Naive thymus-derived CD4-positive, alpha-beta T cell (primary cell): ENCODE measurements at regions of chr1 and their contacts with region 1.

Region 1: GRCh38 chr1:26833432-26834405 is 7.2 kb downstream of the ZDHHC18 start:
- DNase-seq: peak; percentile 59 to 95 (median 88)
- ATAC-seq: peak; percentile 97
- H3K4me3 ChIP-seq: peak overlapping the region; percentile 59
- H3K4me3 Mint-ChIP-seq: peak overlapping the region; percentile 69 to 87 (median 84)
- H3K27ac ChIP-seq: peak overlapping the region; percentile 99
- H3K27ac Mint-ChIP-seq: peak overlapping the region; percentile 95 to 100 (median 99)
- H3K4me1 ChIP-seq: peaks cover 49% of the 10 kb centered on the region in 2 donors
- H3K4me1 Mint-ChIP-seq: peaks cover 50 to 75% (median 64%) of the 10 kb centered on the region in 7 donors
- H3K27me3 ChIP-seq: no peaks in the 10 kb centered on the region
- H3K27me3 Mint-ChIP-seq: no peaks in the 10 kb centered on the region

Region 2: DNA sequence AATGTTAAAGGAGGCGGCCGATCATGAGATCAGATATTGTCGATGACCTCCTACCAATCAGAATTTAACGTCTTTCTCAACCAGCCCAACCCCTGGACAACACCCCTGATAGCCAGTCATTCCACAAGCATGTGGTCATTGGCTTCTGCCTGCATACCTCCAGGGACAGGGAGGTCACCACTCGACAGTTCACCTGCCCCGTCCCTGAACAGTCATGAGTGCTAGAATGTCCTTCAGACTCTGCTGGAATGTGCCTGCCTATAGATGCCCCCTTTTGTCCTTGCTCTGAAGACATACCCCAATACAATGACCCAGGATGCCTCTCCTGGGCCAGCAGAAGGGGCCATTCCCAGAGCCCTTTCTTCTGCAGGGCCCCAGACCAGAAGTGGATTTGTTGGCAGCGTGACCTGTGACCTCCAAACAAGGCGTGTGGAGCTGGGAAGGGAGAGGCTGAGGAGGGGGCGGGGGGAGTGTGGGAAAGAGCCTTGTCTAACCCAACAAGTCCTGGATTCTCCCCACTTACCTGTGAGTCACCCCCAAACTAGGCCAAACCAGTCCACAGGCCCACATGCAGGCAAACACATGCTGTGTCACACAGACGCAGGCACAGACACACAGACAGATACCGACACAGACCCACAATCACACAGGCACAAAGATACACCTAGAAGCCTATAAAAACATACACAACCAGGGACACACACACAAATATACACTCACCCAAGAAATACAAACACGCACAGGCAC is 482.0 kb before region 1 on chr1:
- CTCF ChIA-PET with region 1: no interaction called
- POLR2A ChIA-PET with region 1: no interaction called
- intact Hi-C with region 1: no loop called
- DNase-seq: no peak
- ATAC-seq: no peak
- H3K4me3 ChIP-seq: no peak overlapping the region
- H3K4me3 Mint-ChIP-seq: no peak overlapping the region
- H3K27ac ChIP-seq: no peak overlapping the region
- H3K27ac Mint-ChIP-seq: no peak overlapping the region
- H3K4me1 ChIP-seq: no peaks in the 10 kb centered on the region
- H3K4me1 Mint-ChIP-seq: peaks cover 0 to 5% (median 0%) of the 10 kb centered on the region in 7 donors
- H3K27me3 ChIP-seq: no peaks in the 10 kb centered on the region
- H3K27me3 Mint-ChIP-seq: peaks cover 0 to 3% (median 0%) of the 10 kb centered on the region in 5 donors

Region 3: GRCh38 chr1:26574719-26575251 is 258.9 kb before region 1 on chr1:
- CTCF ChIA-PET with region 1: no interaction called
- POLR2A ChIA-PET with region 1: no interaction called
- intact Hi-C with region 1: no loop called
- DNase-seq: no peak
- ATAC-seq: no peak
- H3K4me3 ChIP-seq: no peak overlapping the region
- H3K4me3 Mint-ChIP-seq: no peak overlapping the region
- H3K27ac ChIP-seq: no peak overlapping the region
- H3K27ac Mint-ChIP-seq: no peak overlapping the region
- H3K4me1 ChIP-seq: no peaks in the 10 kb centered on the region
- H3K4me1 Mint-ChIP-seq: peaks cover 4 to 27% (median 12%) of the 10 kb centered on the region in 7 donors
- H3K27me3 ChIP-seq: no peaks in the 10 kb centered on the region
- H3K27me3 Mint-ChIP-seq: no peaks in the 10 kb centered on the region

Region 4: DNA sequence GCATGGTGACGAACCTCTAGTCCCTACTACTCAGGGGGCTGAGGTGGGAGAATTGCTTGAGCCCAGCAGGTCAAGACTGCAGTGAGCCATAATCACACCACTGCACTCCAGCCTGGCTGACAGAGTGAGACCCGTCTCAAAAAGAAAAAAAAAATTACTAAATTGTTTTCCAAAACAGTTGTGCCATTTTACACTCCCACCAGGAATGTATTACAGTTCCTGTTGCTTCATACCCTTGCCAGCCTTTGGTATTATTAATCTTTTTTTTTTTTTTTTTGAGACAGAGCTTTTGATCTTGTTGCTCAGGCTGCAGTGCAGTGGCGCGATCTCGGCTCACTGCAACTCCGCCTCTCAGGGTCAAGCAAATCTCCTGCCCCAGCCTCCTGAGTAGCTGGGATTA is 248.2 kb before region 1 on chr1:
- CTCF ChIA-PET with region 1: no interaction called
- POLR2A ChIA-PET with region 1: no interaction called
- intact Hi-C with region 1: no loop called
- DNase-seq: no peak
- ATAC-seq: no peak
- H3K4me3 ChIP-seq: no peak overlapping the region
- H3K4me3 Mint-ChIP-seq: no peak overlapping the region
- H3K27ac ChIP-seq: no peak overlapping the region
- H3K27ac Mint-ChIP-seq: no peak overlapping the region
- H3K4me1 ChIP-seq: no peaks in the 10 kb centered on the region
- H3K4me1 Mint-ChIP-seq: peaks cover 0 to 21% (median 7%) of the 10 kb centered on the region in 7 donors
- H3K27me3 ChIP-seq: no peaks in the 10 kb centered on the region
- H3K27me3 Mint-ChIP-seq: no peaks in the 10 kb centered on the region

Region 5: DNA sequence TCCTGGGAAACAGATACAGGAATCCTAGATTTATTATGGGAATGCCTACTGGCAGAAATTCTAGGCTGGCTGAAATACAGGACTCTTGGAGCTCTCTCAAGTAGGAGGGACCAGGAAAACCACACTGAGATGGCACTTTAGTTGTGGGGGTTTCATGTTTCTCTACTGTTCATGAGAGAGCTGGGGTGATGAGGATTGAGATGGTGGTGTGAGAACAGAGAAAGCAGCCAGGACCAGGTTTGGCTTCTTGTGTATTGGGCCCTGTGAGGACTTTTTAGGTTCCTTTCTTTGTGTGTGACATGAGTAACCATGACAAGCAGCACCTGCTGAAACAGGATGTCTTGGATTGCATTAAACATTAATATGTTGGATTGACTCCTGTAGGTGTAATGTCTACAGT is 133.0 kb before region 1 on chr1:
- CTCF ChIA-PET with region 1: no interaction called
- POLR2A ChIA-PET with region 1: no interaction called
- intact Hi-C with region 1: no loop called
- DNase-seq: no peak
- ATAC-seq: no peak
- H3K4me3 ChIP-seq: peak overlapping the region; percentile 25
- H3K4me3 Mint-ChIP-seq: no peak overlapping the region
- H3K27ac ChIP-seq: peak overlapping the region; percentile 83
- H3K27ac Mint-ChIP-seq: no peak overlapping the region
- H3K4me1 ChIP-seq: peaks cover 63 to 66% of the 10 kb centered on the region in 2 donors
- H3K4me1 Mint-ChIP-seq: peaks cover 0 to 10% (median 8%) of the 10 kb centered on the region in 7 donors
- H3K27me3 ChIP-seq: no peaks in the 10 kb centered on the region
- H3K27me3 Mint-ChIP-seq: no peaks in the 10 kb centered on the region

Region 6: DNA sequence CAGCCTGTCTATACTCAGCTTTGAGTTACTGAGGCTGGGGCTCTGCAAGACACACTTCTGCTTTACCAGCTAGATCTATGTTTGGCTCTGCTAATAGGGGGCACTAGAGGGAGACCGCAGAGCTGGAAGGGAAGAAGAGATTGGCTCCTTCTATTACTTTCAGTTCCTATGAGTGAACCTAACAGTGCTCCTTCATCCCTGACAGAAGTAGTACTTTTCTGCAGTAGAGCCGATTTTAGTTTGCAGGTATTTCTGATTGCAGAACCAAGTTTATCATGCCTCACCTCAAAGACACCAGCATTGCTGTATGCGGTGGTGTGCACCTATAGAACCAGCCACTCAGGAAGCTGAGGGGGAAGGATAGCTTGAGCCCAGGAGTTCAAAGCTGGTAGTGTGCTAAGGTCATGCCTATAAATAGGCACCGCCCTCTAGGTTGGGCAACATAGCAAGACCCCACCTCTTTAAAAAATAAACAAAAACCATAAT is 12.9 kb before region 1 on chr1:
- CTCF ChIA-PET with region 1: interaction called, 20 read pairs
- POLR2A ChIA-PET with region 1: interaction called, 34 read pairs
- intact Hi-C with region 1: loop called in 1 of 2 experiments (anchors 1 kb)
- DNase-seq: peak in 7 of 9 donors; percentile 41 to 61 (median 52)
- ATAC-seq: peak; percentile 100
- H3K4me3 ChIP-seq: peak overlapping the region; percentile 51
- H3K4me3 Mint-ChIP-seq: peak overlapping the region; percentile 55 to 86 (median 82)
- H3K27ac ChIP-seq: peak overlapping the region; percentile 54
- H3K27ac Mint-ChIP-seq: peak overlapping the region; percentile 60 to 92 (median 87)
- H3K4me1 ChIP-seq: peaks cover 12 to 22% of the 10 kb centered on the region in 2 donors
- H3K4me1 Mint-ChIP-seq: peaks cover 23 to 38% (median 29%) of the 10 kb centered on the region in 7 donors
- H3K27me3 ChIP-seq: no peaks in the 10 kb centered on the region
- H3K27me3 Mint-ChIP-seq: no peaks in the 10 kb centered on the region

Region 7: GRCh38 chr1:26900001-26900814 is 66.5 kb after region 1 on chr1 and contains the start of gene GPATCH3:
- CTCF ChIA-PET with region 1: no interaction called
- POLR2A ChIA-PET with region 1: interaction called, 12 read pairs
- intact Hi-C with region 1: no loop called
- DNase-seq: peak; percentile 68 to 89 (median 86)
- ATAC-seq: peak; percentile 93
- H3K4me3 ChIP-seq: peak within 1 kb of the TSS; percentile 94
- H3K4me3 Mint-ChIP-seq: peak within 1 kb of the TSS; percentile 87 to 99 (median 96)
- H3K27ac ChIP-seq: peak within 1 kb of the TSS; percentile 90
- H3K27ac Mint-ChIP-seq: peak within 1 kb of the TSS; percentile 94 to 100 (median 99)
- H3K4me1 ChIP-seq: peaks cover 10 to 16% of the 10 kb centered on the region in 2 donors
- H3K4me1 Mint-ChIP-seq: peaks cover 24 to 46% (median 39%) of the 10 kb centered on the region in 7 donors
- H3K27me3 ChIP-seq: no peaks in the 10 kb centered on the region
- H3K27me3 Mint-ChIP-seq: no peaks in the 10 kb centered on the region
- total RNA-seq, gene GPATCH3: 17.0 to 38.4 (median 22.6) TPM